ENCODE measurements at regions of chr16 and their contacts with region 1.

Region 1: GRCh38 chr16:25344006-25344405 is 86.4 kb upstream of the ZKSCAN2 start:
- DNase-seq: no peak
- H3K4me3 ChIP-seq: no peak overlapping the region
- H3K27ac ChIP-seq: no peak overlapping the region
- H3K4me1 ChIP-seq: no peaks in the 10 kb centered on the region
- H3K27me3 ChIP-seq: no peaks in the 10 kb centered on the region
- CTCF ChIP-seq: no peak
- POLR2A ChIP-seq: no peak

Region 2: GRCh38 chr16:25257504-25257955 is 86.5 kb before region 1 on chr16 and contains the start of gene ZKSCAN2:
- intact Hi-C with region 1: no loop called
- DNase-seq: peak in 1 of 2 donors; percentile 90
- H3K4me3 ChIP-seq: peak within 1 kb of the TSS; percentile 68 to 93
- H3K27ac ChIP-seq: peak within 1 kb of the TSS; percentile 93
- H3K4me1 ChIP-seq: peaks cover 42% of the 10 kb centered on the region
- H3K27me3 ChIP-seq: no peaks in the 10 kb centered on the region
- CTCF ChIP-seq: no peak
- POLR2A ChIP-seq: peak in 1 of 2 donors; percentile 71
- total RNA-seq, gene ZKSCAN2: 3.7 TPM

Region 3: DNA sequence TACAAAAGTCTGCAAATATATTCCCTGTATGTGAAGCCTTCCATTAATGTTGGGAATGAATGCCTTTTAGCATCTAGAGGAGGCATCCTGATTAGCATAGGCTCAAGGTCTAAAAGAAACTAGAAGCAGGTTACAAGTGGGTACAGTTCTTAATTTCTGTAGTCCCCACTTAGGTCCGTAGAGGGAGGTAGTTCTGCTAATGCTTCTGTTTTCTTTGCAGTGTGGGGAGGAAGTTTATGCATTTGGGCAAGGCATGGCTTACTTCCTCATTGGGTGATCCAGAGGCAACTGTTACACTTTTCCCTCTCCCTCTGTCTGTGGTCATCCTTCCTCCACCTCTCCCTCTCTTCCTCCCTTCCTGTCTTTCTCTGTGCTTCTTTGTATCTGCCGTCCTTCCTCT is 22.1 kb after region 1 on chr16:
- intact Hi-C with region 1: loop called (anchors 1 kb)
- DNase-seq: no peak
- H3K4me3 ChIP-seq: no peak overlapping the region
- H3K27ac ChIP-seq: no peak overlapping the region
- H3K4me1 ChIP-seq: no peaks in the 10 kb centered on the region
- H3K27me3 ChIP-seq: no peaks in the 10 kb centered on the region
- CTCF ChIP-seq: no peak
- POLR2A ChIP-seq: no peak

Region 4: DNA sequence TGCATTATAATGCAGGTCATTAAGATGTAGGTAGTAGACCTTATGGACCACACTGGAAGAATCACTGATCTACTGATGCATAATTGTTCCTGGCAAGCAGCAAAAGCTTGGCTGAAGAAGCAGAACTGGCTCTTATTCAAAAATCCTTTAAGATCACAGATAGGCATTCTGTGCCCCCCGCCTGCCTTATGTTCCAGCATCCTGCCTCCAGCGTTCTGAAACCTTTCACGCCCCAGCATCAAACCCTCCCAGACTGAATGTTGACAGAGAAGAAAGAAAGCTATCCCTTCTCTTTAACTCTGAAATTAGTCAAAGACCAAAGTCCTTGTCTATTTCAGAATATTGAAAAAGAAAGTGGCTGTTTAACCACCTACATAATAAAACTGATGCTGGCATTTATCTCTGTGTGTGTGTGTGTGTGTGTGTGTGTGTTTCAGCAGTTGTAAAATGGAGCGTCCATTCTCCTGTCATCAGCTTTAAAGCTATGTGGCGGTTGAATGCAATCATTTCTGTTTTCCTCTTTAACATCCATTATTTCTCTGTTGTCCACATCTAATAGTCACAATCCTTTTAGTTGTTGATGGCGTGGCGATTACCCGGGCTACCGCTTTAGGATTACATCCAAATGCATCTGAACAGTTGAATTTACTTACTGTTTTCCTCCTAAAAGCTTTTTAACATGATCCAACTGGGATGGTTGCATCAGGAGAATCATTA is 698.1 kb after region 1 on chr16:
- intact Hi-C with region 1: no loop called
- DNase-seq: no peak
- H3K4me3 ChIP-seq: no peak overlapping the region
- H3K27ac ChIP-seq: no peak overlapping the region
- H3K4me1 ChIP-seq: no peaks in the 10 kb centered on the region
- H3K27me3 ChIP-seq: no peaks in the 10 kb centered on the region
- CTCF ChIP-seq: no peak
- POLR2A ChIP-seq: no peak

Measured in vagina (tissue), 2 donors.